ENCODE measurements at regions of chr3 and their contacts with region 1.

Region 1: GRCh38 chr3:143119009-143119914 is at the start of gene CHST2:
- DNase-seq: peak; percentile 75
- H3K4me3 Mint-ChIP-seq: peak within 1 kb of the TSS; percentile 89
- H3K27ac Mint-ChIP-seq: peak within 1 kb of the TSS; percentile 75
- H3K4me1 Mint-ChIP-seq: peaks cover 48% of the 10 kb centered on the region
- H3K27me3 Mint-ChIP-seq: peaks cover 10% of the 10 kb centered on the region
- total RNA-seq, gene CHST2: 7.4 and 7.7 TPM in 2 replicates

Region 2: DNA sequence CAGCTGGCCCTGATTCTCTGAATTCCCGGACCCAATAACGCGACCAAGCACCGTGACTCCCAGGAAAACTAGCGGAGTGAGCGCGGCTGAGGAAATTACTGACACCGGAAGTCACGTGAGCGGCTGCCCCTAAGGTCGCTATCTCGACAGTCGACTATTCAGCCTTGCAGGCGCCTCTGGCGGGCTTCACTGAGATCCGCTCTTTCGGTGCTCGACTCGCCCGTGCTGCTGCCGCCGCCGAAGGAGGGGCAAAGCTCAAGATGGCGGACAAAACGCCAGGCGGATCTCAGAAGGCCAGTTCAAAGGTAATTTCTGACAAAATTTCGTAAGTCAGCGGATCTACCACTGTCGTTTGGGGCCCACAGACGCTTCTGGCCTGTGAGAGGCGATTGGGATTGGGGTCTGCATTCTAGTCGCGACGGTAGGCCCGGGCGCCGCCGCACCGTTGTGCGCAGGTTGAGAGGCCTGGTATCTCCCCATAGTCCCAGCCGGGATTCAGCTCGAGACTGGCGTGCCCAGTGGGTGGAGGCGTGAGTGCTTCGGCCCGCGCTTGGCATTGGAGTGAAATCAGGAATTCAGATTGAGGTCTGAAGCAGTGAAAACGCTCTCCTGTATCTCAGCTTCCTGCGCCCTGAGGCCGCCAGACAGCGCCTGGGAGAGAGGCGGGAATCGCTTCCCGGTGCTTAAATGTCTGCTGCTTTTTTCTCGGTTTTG is 117.7 kb before region 1 on chr3 and contains the start of gene U2SURP:
- intact Hi-C with region 1: loop called (anchors 5 kb)
- DNase-seq: peak; percentile 91
- H3K4me3 Mint-ChIP-seq: peak within 1 kb of the TSS; percentile 94
- H3K27ac Mint-ChIP-seq: peak within 1 kb of the TSS; percentile 96
- H3K4me1 Mint-ChIP-seq: peaks cover 22% of the 10 kb centered on the region
- H3K27me3 Mint-ChIP-seq: peaks cover 3% of the 10 kb centered on the region
- total RNA-seq, gene U2SURP: 176 TPM in 2 replicates

Region 3: DNA sequence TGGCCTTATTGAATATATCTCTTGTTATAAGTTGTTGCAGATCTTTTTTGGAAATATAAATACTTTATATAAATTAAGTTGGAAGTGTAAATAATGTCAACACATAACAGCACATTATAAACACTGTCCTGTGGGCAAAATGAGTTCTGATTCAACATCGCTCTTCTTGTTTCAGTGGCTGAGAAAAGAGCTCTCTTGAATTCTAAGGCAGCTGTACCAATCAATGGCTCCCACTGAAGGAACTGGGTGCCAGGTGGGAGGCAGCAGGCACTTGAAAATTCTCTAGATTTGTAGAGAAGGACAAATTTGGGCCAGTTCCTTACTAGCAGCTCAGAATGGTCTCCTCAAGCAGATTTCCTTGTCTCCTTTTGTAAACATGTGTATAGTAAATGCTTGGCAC is 45.9 kb after region 1 on chr3:
- intact Hi-C with region 1: loop called (anchors 1 kb)
- DNase-seq: no peak
- H3K4me3 Mint-ChIP-seq: peak overlapping the region; percentile 59
- H3K27ac Mint-ChIP-seq: peak overlapping the region; percentile 90
- H3K4me1 Mint-ChIP-seq: peaks cover 70% of the 10 kb centered on the region
- H3K27me3 Mint-ChIP-seq: no peaks in the 10 kb centered on the region

Region 4: DNA sequence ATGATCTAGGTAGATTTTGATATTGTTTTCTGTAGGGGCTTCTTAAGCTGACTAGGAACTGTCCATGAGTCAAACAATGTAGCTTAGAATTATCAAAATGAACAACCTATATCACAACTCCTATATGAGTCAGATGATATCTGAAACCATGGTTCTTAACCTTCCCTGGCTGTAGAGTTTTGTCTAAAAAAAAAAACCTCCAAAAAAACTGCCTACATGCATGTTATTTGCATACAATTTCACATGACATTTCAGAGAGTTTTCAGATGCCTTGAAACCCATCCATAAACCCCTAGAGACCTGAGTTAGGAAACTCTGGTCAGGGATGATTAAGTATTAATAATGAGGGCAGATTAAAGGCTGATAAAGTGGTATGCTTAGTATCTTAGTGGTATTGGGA is 157.3 kb after region 1 on chr3:
- intact Hi-C with region 1: loop called (anchors 5 kb)
- DNase-seq: no peak
- H3K4me3 Mint-ChIP-seq: no peak overlapping the region
- H3K27ac Mint-ChIP-seq: peak overlapping the region; percentile 5
- H3K4me1 Mint-ChIP-seq: peaks cover 18% of the 10 kb centered on the region
- H3K27me3 Mint-ChIP-seq: no peaks in the 10 kb centered on the region

Region 5: DNA sequence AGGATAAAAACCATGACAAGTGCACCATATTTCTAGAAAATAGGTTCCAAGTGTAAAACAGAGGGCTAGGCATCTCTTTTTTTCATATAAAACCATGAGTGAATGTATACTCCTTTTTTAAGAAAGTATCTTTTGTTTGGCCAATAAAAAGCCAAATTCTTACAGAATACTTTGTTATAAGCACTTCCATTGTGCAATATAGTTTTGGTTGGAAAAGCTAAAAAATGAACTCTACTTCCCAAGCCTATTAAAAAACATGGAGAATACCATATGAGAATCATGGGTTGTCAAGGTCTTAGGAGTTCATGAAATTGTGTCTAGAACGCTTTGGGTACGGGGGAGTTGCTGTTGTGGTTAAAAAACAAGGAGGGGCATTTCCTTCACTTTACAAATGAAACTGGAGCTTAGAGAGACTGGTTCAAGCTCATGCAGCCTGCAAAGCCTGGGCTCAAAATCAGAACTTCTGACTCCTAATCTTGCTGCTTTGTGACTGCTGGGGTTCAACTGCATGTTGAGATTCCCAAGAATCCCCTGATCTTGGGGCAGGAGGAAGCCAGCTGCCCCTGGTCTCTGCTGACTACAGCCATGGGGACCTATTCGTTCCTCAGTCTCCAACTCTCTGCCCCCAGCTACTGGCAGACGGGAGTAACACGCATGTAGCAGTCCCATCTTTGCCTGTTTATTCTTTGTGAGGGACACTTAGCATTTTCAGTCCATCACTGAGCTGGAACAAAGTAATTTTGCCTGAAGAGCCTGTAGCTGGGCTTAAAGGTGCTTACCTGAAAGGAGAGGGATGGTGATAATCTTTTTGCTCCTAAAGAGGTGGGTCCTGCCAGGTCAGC is 229.4 kb after region 1 on chr3:
- intact Hi-C with region 1: loop called (anchors 5 kb)
- DNase-seq: no peak
- H3K4me3 Mint-ChIP-seq: no peak overlapping the region
- H3K27ac Mint-ChIP-seq: no peak overlapping the region
- H3K4me1 Mint-ChIP-seq: peaks cover 30% of the 10 kb centered on the region
- H3K27me3 Mint-ChIP-seq: no peaks in the 10 kb centered on the region

Region 6: DNA sequence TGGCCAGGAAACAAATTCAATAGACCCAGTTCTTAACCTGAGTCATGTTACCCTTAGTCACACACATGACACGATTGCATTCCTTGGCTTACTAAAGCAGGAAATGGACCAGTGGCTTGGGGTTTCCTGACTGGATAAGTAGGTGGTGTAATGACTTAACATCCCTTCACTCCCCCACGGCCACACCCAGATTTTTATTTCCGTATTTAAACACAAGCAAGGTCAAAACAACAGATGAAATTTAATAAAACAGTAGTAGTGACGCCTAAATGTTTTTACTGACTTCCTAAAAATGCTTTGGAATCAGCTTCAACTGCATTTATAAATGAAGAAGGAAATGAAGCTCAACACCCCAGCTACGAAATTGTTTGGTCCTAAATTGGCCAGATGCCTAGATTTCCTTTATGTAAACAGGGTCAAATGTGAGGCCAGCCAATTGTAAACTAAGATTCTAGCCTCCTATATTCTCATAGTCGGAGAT is 324.6 kb after region 1 on chr3:
- intact Hi-C with region 1: loop called (anchors 2 kb)
- DNase-seq: no peak
- H3K4me3 Mint-ChIP-seq: peak overlapping the region; percentile 11
- H3K27ac Mint-ChIP-seq: no peak overlapping the region
- H3K4me1 Mint-ChIP-seq: peaks cover 29% of the 10 kb centered on the region
- H3K27me3 Mint-ChIP-seq: peaks cover 5% of the 10 kb centered on the region

Region 7: DNA sequence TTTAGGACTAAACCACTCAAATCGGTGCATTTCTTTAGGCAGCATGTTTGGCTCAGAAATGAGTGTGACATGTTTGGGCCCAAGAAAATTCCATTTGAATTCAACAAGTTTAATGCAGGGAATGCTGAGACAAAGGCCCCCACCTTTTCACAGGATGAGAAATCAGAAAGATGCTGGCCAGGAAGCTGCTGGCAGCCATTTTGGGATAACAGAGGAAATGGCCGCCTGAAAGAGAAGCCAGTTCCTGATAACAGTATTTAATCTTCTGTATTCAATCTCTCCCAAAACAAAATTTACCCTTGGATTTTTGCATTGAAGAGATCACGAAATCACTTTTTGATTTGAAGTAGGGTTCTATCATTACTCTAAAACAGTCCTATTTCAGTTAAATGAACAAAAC is 378.1 kb after region 1 on chr3:
- intact Hi-C with region 1: no loop called
- DNase-seq: no peak
- H3K4me3 Mint-ChIP-seq: no peak overlapping the region
- H3K27ac Mint-ChIP-seq: no peak overlapping the region
- H3K4me1 Mint-ChIP-seq: no peaks in the 10 kb centered on the region
- H3K27me3 Mint-ChIP-seq: no peaks in the 10 kb centered on the region

Region 8: DNA sequence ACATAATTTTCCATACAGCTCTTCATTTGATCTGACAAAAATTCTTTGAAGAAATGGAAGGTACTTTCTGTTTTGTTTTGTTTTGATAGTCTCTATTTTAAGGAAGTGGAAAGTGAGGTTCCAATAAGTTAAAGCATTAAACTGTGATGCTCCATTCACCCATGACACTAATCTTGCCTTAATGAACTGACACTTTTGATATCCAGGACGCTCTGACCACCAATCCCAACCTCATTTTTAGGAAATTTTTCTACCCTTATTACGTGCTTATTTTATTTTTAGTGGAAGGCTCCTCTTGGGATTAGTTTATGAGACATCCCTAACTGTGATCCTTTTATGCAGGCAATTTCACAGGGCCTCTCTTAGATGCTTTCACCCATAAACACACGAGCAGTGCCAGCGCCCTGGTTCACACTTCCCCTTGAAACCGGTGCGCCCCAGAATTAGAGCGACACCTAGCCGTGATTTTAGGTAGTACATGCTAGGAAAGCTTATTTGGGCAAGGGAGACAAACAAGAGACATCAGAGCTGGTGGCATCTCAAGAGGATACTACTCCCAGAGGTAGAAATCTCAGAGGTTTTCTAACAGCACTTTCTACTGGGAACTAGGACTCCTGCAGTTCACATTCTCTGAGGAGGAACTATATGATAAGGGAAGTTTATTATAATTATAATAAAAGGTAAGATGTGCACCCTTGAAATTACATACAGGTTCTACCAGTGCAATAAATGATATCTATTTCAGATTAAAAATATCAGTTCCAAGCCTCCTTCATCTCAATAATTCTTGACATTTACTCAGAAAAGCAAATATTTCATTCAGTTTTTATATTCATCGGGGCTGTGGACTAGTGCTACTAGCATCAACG is 555.1 kb after region 1 on chr3:
- intact Hi-C with region 1: loop called (anchors 1 kb)
- DNase-seq: peak; percentile 66
- H3K4me3 Mint-ChIP-seq: no peak overlapping the region
- H3K27ac Mint-ChIP-seq: no peak overlapping the region
- H3K4me1 Mint-ChIP-seq: peaks cover 8% of the 10 kb centered on the region
- H3K27me3 Mint-ChIP-seq: peaks cover 15% of the 10 kb centered on the region

Measured in activated T-helper 2 cell treated with anti-CD3 and anti-CD28 coated beads, Interferon-gamma antibody, Interleukin-2, Interleukin-4, amounts not matched to agents 10 μg/mL and 5 μg/mL and 100 μg/mL, durations not matched to agents 14 hours and 24 hours and 36 hours (primary cell).